ENCODE measurements at regions of chr11 and their contacts with region 1.

Region 1: DNA sequence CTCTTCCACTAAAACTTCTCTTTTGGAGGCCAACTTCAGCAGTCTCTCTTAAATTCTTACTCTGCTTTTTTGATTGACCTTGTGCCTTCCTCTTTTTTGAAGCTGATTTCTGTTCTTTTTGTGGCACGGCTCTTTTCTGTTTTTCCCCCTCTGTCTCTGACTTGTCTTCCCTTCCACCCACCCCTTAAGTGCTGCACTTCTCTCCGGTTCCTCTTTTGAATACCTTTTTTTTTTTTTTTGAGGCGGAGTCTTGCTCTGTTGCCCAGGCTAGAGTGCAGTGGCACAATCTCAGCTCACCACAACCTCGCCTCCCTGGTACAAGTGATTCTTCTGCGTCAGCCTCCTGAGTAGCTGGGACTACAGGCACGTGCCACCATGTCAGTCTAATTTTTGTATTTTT is 211.9 kb downstream of the BLID start:
- DNase-seq: no peak
- H3K4me3 ChIP-seq: no peak overlapping the region
- H3K27ac ChIP-seq: no peak overlapping the region
- H3K4me1 ChIP-seq: no peaks in the 10 kb centered on the region
- H3K27me3 ChIP-seq: no peaks in the 10 kb centered on the region
- CTCF ChIP-seq: no peak
- EP300 ChIP-seq: no peak
- POLR2A ChIP-seq: no peak

Region 2: GRCh38 chr11:120151536-120151935 is 1752.6 kb before region 1 on chr11:
- in situ Hi-C with region 1: no loop called
- intact Hi-C with region 1: loop called (anchors 10 kb)
- DNase-seq: no peak
- H3K4me3 ChIP-seq: no peak overlapping the region
- H3K27ac ChIP-seq: no peak overlapping the region
- H3K4me1 ChIP-seq: no peaks in the 10 kb centered on the region
- H3K27me3 ChIP-seq: peaks cover 17% of the 10 kb centered on the region
- CTCF ChIP-seq: no peak
- EP300 ChIP-seq: no peak
- POLR2A ChIP-seq: no peak

Region 3: GRCh38 chr11:121625777-121626506 is 278.2 kb before region 1 on chr11:
- in situ Hi-C with region 1: no loop called
- intact Hi-C with region 1: no loop called
- DNase-seq: no peak
- H3K4me3 ChIP-seq: no peak overlapping the region
- H3K27ac ChIP-seq: no peak overlapping the region
- H3K4me1 ChIP-seq: no peaks in the 10 kb centered on the region
- H3K27me3 ChIP-seq: no peaks in the 10 kb centered on the region
- CTCF ChIP-seq: no peak
- EP300 ChIP-seq: no peak
- POLR2A ChIP-seq: no peak

Region 4: GRCh38 chr11:121671283-121672168 is 232.6 kb before region 1 on chr11:
- in situ Hi-C with region 1: no loop called
- intact Hi-C with region 1: no loop called
- DNase-seq: no peak
- H3K4me3 ChIP-seq: no peak overlapping the region
- H3K27ac ChIP-seq: peak overlapping the region; percentile 60 to 81 (median 71)
- H3K4me1 ChIP-seq: peaks cover 8 to 22% (median 14%) of the 10 kb centered on the region in 4 donors
- H3K27me3 ChIP-seq: no peaks in the 10 kb centered on the region
- CTCF ChIP-seq: no peak
- EP300 ChIP-seq: no peak
- POLR2A ChIP-seq: no peak

Region 5: DNA sequence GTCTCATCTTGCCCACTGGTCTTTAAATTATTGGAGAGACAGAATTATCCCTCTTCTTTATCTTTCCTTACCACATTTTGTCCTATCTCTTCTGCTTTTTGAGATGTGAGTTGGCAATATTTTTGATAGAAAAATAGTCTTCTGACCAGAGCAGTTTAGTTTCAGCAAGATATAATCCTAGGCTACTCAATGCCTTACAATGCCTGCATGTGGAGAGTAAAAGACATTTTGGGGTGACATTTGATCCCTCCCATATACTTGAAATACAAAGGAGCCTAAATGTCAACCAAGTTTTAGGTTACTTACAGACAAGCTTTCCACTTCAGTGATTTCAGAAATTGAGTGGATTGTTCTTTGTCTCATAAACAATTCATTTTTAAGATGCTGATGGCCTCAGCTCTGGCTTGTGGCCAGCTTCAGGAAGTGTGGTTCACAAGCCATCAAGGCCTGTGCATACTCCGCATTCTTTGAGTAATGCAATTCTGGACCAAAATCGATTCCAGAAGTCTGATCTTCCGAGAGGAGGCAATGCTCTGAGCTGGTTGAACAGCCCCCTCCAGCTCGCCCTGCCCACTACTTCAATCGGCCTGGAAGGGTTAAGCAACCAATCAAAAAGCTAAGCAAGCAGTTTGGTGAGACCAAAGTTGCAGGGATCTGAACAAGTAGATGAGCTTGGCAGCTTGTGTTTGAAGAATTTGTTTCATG is 62.5 kb before region 1 on chr11:
- in situ Hi-C with region 1: no loop called
- intact Hi-C with region 1: no loop called
- DNase-seq: no peak
- H3K4me3 ChIP-seq: no peak overlapping the region
- H3K27ac ChIP-seq: no peak overlapping the region
- H3K4me1 ChIP-seq: no peaks in the 10 kb centered on the region
- H3K27me3 ChIP-seq: no peaks in the 10 kb centered on the region
- CTCF ChIP-seq: no peak
- EP300 ChIP-seq: no peak
- POLR2A ChIP-seq: no peak